T-cell (primary cell): ENCODE measurements at regions of chr2 and their contacts with region 1.

Region 1: DNA sequence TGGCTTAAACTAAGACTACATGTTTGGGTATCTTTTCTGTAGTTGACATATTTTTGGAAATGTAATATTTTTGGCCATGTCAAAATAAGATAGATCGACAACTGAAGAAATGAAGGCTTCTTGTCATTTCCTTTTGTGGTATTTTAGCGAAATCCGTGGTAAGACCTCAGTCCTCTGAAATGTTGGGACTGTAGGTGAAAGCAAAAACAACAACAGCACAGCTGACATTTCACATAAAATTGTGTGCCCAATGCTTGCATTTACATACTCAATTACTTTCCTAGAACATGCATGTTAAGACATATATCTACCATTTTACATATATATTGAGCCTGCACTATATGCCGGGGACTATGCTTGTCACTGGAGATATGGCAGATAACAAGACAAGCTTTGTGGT is 50.2 kb downstream of the SPP2 start:
- DNase-seq: peak in 2 of 35 experiments; percentile 9 to 57
- ATAC-seq: peak; percentile 48 to 63 (median 56)
- H3K4me3 ChIP-seq: no peak overlapping the region
- H3K4me3 Mint-ChIP-seq: peak overlapping the region in 2 of 3 donors; percentile 3 to 66
- H3K27ac ChIP-seq: peak overlapping the region; percentile 38
- H3K27ac Mint-ChIP-seq: peak overlapping the region; percentile 77 to 78
- H3K4me1 ChIP-seq: peaks cover 17 to 26% of the 10 kb centered on the region in 2 experiments
- H3K4me1 Mint-ChIP-seq: peaks cover 40 to 54% (median 42%) of the 10 kb centered on the region in 3 donors
- H3K27me3 ChIP-seq: no peaks in the 10 kb centered on the region
- H3K27me3 Mint-ChIP-seq: no peaks in the 10 kb centered on the region

Region 2: GRCh38 chr2:234111523-234111922 is 10.8 kb after region 1 on chr2:
- CTCF ChIA-PET with region 1: no interaction called
- POLR2A ChIA-PET with region 1: no interaction called
- DNase-seq: no peak
- ATAC-seq: no peak
- H3K4me3 ChIP-seq: no peak overlapping the region
- H3K4me3 Mint-ChIP-seq: no peak overlapping the region
- H3K27ac ChIP-seq: no peak overlapping the region
- H3K27ac Mint-ChIP-seq: no peak overlapping the region
- H3K4me1 ChIP-seq: no peaks in the 10 kb centered on the region
- H3K4me1 Mint-ChIP-seq: no peaks in the 10 kb centered on the region
- H3K27me3 ChIP-seq: peaks cover 0 to 3% of the 10 kb centered on the region in 2 experiments
- H3K27me3 Mint-ChIP-seq: peaks cover 3 to 5% of the 10 kb centered on the region in 2 donors

Region 3: DNA sequence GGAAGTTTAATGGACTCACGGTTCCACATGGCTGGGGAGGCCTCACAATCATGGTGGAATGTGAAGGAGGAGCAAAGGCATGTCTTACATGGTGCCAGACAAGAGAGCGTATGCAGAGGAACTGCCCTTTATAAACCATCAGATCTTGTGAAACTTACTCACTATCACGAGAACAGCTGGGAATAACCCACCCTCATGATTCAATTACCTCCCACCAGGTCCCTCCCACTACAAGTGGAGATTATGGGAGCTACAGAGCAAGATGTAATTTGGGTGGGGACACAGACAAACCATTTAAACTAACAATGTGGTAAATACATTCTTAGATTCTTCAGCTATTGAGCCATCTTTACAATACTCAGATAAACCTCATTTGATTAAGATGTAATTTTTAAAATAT is 1027.2 kb after region 1 on chr2:
- CTCF ChIA-PET with region 1: no interaction called
- POLR2A ChIA-PET with region 1: interaction called in 1 of 2 experiments, 11 read pairs
- DNase-seq: no peak
- ATAC-seq: no peak
- H3K4me3 ChIP-seq: no peak overlapping the region
- H3K4me3 Mint-ChIP-seq: no peak overlapping the region
- H3K27ac ChIP-seq: no peak overlapping the region
- H3K27ac Mint-ChIP-seq: no peak overlapping the region
- H3K4me1 ChIP-seq: no peaks in the 10 kb centered on the region
- H3K4me1 Mint-ChIP-seq: no peaks in the 10 kb centered on the region
- H3K27me3 ChIP-seq: peaks cover 2 to 19% of the 10 kb centered on the region in 2 experiments
- H3K27me3 Mint-ChIP-seq: peaks cover 28 to 41% of the 10 kb centered on the region in 2 donors